CD4-positive, alpha-beta memory T cell (primary cell): ENCODE measurements at regions of chr6 and their contacts with region 1.

Region 1: GRCh38 chr6:99520855-99521632 is 5.8 kb upstream of the USP45 start:
- DNase-seq: peak; percentile 66 to 79 (median 71)
- H3K4me3 ChIP-seq: peak overlapping the region; percentile 87 to 99
- H3K4me3 Mint-ChIP-seq: peak overlapping the region; percentile 92 to 99 (median 98)
- H3K27ac ChIP-seq: peak overlapping the region; percentile 64
- H3K27ac Mint-ChIP-seq: peak overlapping the region; percentile 67 to 97 (median 96)
- H3K4me1 ChIP-seq: peaks cover 23% of the 10 kb centered on the region
- H3K4me1 Mint-ChIP-seq: peaks cover 8 to 31% (median 24%) of the 10 kb centered on the region in 4 donors
- H3K27me3 ChIP-seq: no peaks in the 10 kb centered on the region
- H3K27me3 Mint-ChIP-seq: no peaks in the 10 kb centered on the region

Region 2: DNA sequence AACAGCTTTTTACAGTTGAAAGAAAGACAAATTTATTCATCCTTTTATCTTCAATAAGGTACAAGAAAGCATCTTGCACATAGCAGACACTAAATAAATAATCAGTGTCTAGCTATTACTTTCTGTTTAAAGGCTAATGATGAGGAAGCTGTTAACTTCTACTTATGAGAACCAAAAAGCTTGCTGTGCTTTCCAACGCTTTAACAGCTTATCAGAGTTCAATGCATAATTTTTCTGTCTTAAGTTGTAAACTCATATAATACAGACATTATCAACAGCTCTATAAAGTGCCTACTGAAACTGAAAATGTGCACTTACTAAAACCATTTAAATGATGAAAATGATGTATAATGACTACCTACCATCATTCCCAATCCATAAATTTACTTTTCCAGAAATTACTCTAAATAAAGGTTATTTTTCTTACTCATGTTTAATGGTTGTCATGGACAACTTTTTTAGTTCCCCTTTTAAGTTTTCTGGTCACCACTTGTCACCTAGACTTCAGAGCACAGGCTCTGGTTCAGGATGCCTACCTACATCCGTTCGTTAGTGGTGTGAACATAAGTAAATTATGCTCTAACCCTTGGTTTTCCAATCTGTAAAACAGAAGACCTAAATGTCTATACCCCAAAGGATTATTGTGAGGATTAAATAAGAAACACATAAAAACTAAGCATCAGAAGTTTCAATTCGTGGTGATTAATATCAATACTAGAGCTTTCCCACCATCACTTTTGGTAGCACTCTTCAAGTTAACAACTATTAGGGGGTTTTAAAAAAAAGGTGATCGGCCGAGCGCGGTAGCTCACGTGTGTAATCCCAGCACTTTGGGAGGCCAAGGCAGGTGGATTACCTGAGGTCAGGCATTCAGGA is 103.9 kb before region 1 on chr6:
- CTCF ChIA-PET with region 1: no interaction called
- POLR2A ChIA-PET with region 1: no interaction called
- intact Hi-C with region 1: no loop called
- DNase-seq: no peak
- H3K4me3 ChIP-seq: no peak overlapping the region
- H3K4me3 Mint-ChIP-seq: peak overlapping the region; percentile 38 to 71 (median 54)
- H3K27ac ChIP-seq: no peak overlapping the region
- H3K27ac Mint-ChIP-seq: peak overlapping the region in 5 of 7 donors; percentile 22 to 57 (median 50)
- H3K4me1 ChIP-seq: peaks cover 73% of the 10 kb centered on the region
- H3K4me1 Mint-ChIP-seq: peaks cover 42 to 75% (median 57%) of the 10 kb centered on the region in 4 donors
- H3K27me3 ChIP-seq: no peaks in the 10 kb centered on the region
- H3K27me3 Mint-ChIP-seq: no peaks in the 10 kb centered on the region

Region 3: GRCh38 chr6:99490608-99491007 is 30.4 kb before region 1 on chr6:
- CTCF ChIA-PET with region 1: interaction called, 3 read pairs
- POLR2A ChIA-PET with region 1: no interaction called
- intact Hi-C with region 1: loop called (anchors 1 kb)
- DNase-seq: peak; percentile 28 to 44 (median 44)
- H3K4me3 ChIP-seq: no peak overlapping the region
- H3K4me3 Mint-ChIP-seq: peak overlapping the region in 7 of 8 donors; percentile 4 to 60 (median 49)
- H3K27ac ChIP-seq: no peak overlapping the region
- H3K27ac Mint-ChIP-seq: peak overlapping the region; percentile 42 to 82 (median 69)
- H3K4me1 ChIP-seq: peaks cover 15% of the 10 kb centered on the region
- H3K4me1 Mint-ChIP-seq: peaks cover 11 to 18% (median 13%) of the 10 kb centered on the region in 4 donors
- H3K27me3 ChIP-seq: no peaks in the 10 kb centered on the region
- H3K27me3 Mint-ChIP-seq: no peaks in the 10 kb centered on the region

Region 4: DNA sequence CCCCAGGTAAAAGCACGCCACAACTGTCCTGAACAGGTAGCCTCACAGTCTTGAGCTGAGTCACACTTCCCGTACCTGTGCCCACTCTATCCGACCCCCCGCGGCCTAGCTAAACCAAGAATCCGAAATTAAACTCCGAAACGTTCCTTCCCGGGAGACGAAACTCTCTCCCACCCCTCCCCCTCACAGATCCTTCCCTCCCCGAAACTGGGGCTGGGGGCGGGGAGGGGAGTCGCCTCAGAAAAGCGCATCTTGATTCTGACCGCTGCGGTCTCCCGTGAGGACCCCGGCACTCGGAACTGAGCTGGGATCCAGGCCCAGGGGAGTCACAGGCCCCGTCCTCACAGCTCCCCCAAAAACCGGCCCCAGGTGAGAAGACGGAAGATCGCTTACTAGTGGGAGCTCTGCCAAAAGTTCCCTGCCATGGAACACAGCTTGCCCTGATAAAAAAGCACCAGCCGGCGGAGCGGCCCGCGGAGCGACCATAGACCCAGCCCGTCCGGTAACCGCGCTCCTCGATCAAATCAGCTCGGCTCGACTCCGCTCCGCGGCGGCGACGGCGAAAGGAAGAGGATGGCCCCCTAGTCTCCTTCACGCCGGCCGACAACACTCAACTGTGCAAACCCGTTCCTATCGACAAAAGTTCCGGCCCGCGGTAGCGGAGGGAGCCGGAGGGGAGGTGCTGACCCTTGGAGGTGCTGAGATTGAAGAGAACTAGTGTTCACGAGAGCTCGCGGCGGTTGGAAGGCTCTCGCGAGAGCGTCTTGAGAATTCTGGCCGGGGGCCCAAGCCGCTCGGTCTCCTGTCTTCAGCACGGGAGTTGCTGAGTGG is 47.3 kb after region 1 on chr6 and contains the start of gene CCNC:
- CTCF ChIA-PET with region 1: interaction called, 5 read pairs
- POLR2A ChIA-PET with region 1: interaction called, 11 read pairs
- intact Hi-C with region 1: loop called (anchors 1 kb)
- DNase-seq: peak; percentile 87 to 89 (median 88)
- H3K4me3 ChIP-seq: peak within 1 kb of the TSS; percentile 79 to 86
- H3K4me3 Mint-ChIP-seq: peak within 1 kb of the TSS; percentile 93 to 100 (median 99)
- H3K27ac ChIP-seq: peak within 1 kb of the TSS; percentile 78
- H3K27ac Mint-ChIP-seq: peak within 1 kb of the TSS; percentile 88 to 98 (median 95)
- H3K4me1 ChIP-seq: peaks cover 24% of the 10 kb centered on the region
- H3K4me1 Mint-ChIP-seq: peaks cover 25 to 53% (median 31%) of the 10 kb centered on the region in 4 donors
- H3K27me3 ChIP-seq: no peaks in the 10 kb centered on the region
- H3K27me3 Mint-ChIP-seq: no peaks in the 10 kb centered on the region
- total RNA-seq, gene CCNC: 41.3 to 42.7 TPM

Region 5: GRCh38 chr6:99602520-99603420 is 81.7 kb after region 1 on chr6:
- CTCF ChIA-PET with region 1: no interaction called
- POLR2A ChIA-PET with region 1: no interaction called
- intact Hi-C with region 1: no loop called
- DNase-seq: no peak
- H3K4me3 ChIP-seq: peak overlapping the region in 1 of 2 donors; percentile 6
- H3K4me3 Mint-ChIP-seq: peak overlapping the region; percentile 55 to 84 (median 76)
- H3K27ac ChIP-seq: no peak overlapping the region
- H3K27ac Mint-ChIP-seq: peak overlapping the region in 2 of 7 donors; percentile 75 to 79
- H3K4me1 ChIP-seq: peaks cover 37% of the 10 kb centered on the region
- H3K4me1 Mint-ChIP-seq: peaks cover 10 to 46% (median 27%) of the 10 kb centered on the region in 4 donors
- H3K27me3 ChIP-seq: peaks cover 65% of the 10 kb centered on the region
- H3K27me3 Mint-ChIP-seq: peaks cover 70 to 73% of the 10 kb centered on the region in 2 donors

Region 6: GRCh38 chr6:99613409-99613704 is 92.3 kb after region 1 on chr6:
- CTCF ChIA-PET with region 1: interaction called, 3 read pairs
- POLR2A ChIA-PET with region 1: interaction called, 3 read pairs
- intact Hi-C with region 1: loop called (anchors 5 kb)
- DNase-seq: no peak
- H3K4me3 ChIP-seq: no peak overlapping the region
- H3K4me3 Mint-ChIP-seq: peak overlapping the region in 3 of 8 donors; percentile 35 to 80 (median 63)
- H3K27ac ChIP-seq: no peak overlapping the region
- H3K27ac Mint-ChIP-seq: no peak overlapping the region
- H3K4me1 ChIP-seq: peaks cover 31% of the 10 kb centered on the region
- H3K4me1 Mint-ChIP-seq: peaks cover 9 to 42% (median 21%) of the 10 kb centered on the region in 4 donors
- H3K27me3 ChIP-seq: peaks cover 90% of the 10 kb centered on the region
- H3K27me3 Mint-ChIP-seq: peaks cover 61 to 70% of the 10 kb centered on the region in 2 donors